GM13976 (cell line): ENCODE measurements at regions of chr17 and their contacts with region 1.

Region 1: DNA sequence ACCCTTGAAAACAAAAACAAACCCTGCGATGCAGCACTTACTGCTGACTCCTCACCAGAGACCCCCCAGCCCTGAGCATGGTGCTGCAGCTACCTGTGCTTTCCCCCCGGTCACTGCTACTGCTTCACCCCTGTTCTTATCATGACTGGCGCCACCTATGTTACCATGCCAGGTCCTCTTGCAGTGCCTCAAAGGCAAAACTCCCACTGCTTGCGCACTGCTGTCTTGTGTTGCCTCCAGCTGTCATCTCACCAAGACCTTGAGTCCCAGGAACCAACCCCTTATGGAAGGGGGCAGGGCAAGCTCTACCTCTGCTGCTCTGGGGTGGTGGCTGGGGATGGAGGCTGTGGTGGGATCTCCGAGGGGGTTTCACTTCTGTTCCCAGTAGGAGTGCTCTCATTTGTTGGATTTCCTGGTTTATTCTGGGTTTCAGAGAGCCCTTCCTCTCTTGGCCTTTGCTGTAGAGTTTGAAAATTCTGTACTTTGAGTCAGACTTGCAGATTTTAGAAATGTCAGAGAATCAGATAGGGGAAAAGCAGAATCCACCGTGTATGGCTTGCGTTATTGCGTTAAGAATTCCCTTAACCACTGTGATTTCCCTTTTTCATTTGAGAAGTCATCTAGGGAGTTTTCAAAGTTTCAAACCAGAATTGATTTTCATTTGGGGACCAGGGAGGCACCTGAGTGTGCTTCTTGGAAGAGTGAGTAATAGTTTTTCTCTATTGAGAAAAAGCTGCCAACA is 96.6 kb downstream of the SPECC1 start:
- DNase-seq: no peak
- CTCF ChIP-seq: no peak

Region 2: GRCh38 chr17:19992803-19993713 is 112.7 kb before region 1 on chr17:
- in situ Hi-C with region 1: loop called (anchors 5 kb)
- DNase-seq: peak; percentile 76
- CTCF ChIP-seq: peak; percentile 64

Region 3: DNA sequence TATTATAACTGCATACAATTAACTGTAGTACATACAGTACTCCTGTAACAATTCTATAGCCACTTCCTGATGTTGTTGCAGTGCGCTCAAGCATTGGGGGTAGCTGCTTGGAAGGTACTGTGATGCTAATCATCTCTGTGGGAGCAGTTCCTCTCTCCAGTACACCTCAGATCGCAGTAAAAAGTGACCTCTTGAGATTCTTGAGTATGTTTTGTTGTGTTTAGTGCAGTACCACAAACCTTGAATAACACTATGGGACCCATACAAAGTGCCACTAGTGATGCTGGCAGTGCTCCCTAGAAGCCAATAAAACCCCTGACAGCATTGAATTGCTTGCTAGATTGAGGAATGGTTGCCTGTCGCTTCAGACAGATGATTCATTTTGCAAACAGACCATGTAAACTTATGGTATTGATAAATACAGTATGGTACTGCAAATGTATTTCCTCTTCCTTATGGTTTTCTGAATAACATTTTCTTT is 96.5 kb after region 1 on chr17:
- in situ Hi-C with region 1: no loop called
- DNase-seq: no peak
- CTCF ChIP-seq: no peak

Region 4: GRCh38 chr17:20216154-20216815 is 110.6 kb after region 1 on chr17:
- in situ Hi-C with region 1: no loop called
- DNase-seq: no peak
- CTCF ChIP-seq: no peak